ENCODE measurements at regions of chr16 and their contacts with region 1.

Region 1: GRCh38 chr16:81873843-81874752 is 95.0 kb downstream of the PLCG2 start:
- DNase-seq: peak; percentile 60
- CTCF ChIP-seq: peak; percentile 68

Region 2: GRCh38 chr16:81366316-81366932 is 507.7 kb before region 1 on chr16:
- in situ Hi-C with region 1: loop called (anchors 25 kb)
- DNase-seq: peak; percentile 54
- CTCF ChIP-seq: peak; percentile 62